H1 (cell line): ENCODE measurements at regions of chr9 and their contacts with region 1.

Region 1: DNA sequence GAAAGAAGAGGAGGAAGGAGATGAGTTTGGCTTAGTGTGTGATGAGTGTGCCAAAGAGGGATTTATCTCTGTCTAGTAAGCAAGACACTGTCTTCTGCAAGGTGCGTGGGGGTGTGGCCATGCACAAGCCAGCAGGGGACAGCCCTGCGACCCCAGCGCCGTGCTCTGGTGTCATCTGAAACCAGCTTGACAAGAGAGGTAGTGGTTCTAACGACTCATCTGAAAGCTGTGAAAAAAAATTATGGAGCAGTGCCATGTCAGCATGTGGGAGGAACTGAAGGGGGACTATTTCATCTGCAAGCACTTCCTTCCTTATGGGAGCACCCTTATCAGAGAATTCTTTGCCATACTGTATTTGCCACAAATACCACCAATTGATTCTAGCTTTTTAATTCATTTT is 398.6 kb downstream of the PSAT1 start:
- DNase-seq: no peak
- H3K4me3 ChIP-seq: no peak overlapping the region
- H3K27ac ChIP-seq: no peak overlapping the region
- H3K4me1 ChIP-seq: no peaks in the 10 kb centered on the region
- H3K27me3 ChIP-seq: no peaks in the 10 kb centered on the region
- CTCF ChIP-seq: no peak
- EP300 ChIP-seq: no peak
- POLR2A ChIP-seq: no peak
- RAD21 ChIP-seq: no peak

Region 2: DNA sequence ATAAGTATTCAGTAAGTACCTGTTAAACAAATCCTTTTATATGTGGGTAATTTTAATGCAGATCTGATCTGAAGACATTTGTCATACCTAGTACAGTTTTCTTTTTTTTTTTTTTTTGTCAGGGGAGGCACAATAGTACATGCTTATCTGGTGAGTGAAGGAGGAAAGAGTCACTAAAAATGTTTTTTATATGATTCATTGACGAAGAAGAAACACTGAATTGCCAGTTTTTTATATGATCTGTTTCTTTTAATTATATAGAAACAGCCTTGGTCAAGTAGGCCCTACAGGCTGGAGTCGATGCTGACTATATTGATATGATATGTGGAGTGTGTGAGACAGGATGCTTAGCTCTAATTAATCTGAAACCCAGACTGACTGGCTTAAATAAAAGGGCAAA is 83.4 kb before region 1 on chr9:
- CTCF ChIA-PET with region 1: no interaction called
- POLR2A ChIA-PET with region 1: no interaction called
- DNase-seq: no peak
- H3K4me3 ChIP-seq: no peak overlapping the region
- H3K27ac ChIP-seq: no peak overlapping the region
- H3K4me1 ChIP-seq: peaks cover 0 to 9% (median 1%) of the 10 kb centered on the region in 4 experiments; a peak in 1 of 7 replicates
- H3K27me3 ChIP-seq: no peaks in the 10 kb centered on the region
- CTCF ChIP-seq: no peak
- EP300 ChIP-seq: no peak
- POLR2A ChIP-seq: no peak
- RAD21 ChIP-seq: no peak

Region 3: DNA sequence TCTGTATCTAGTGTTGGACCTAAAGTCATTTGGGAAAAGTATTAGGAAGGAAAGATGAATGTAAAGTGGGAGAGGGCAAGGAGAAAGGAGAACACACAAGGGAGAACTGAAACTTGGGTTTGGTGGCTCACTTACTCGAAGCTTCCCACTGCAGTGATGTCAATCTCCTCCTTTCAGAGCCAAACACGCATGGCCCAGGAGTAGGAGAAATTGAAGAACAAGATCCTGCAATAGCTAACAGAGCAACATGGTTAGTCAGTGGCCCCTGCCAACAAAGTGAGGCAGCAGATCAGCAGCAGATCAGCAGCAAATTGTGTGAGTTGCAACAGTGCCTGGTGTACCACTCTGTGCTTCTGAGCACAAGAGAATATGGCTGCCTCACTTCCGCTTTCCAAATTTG is 32.1 kb before region 1 on chr9:
- CTCF ChIA-PET with region 1: no interaction called
- POLR2A ChIA-PET with region 1: no interaction called
- DNase-seq: no peak
- H3K4me3 ChIP-seq: no peak overlapping the region
- H3K27ac ChIP-seq: no peak overlapping the region
- H3K4me1 ChIP-seq: peaks cover 0 to 4% (median 0%) of the 10 kb centered on the region in 4 experiments; a peak in 1 of 7 replicates
- H3K27me3 ChIP-seq: no peaks in the 10 kb centered on the region
- CTCF ChIP-seq: no peak
- EP300 ChIP-seq: no peak
- POLR2A ChIP-seq: no peak
- RAD21 ChIP-seq: no peak

Region 4: GRCh38 chr9:78707481-78707991 is 12.0 kb after region 1 on chr9:
- CTCF ChIA-PET with region 1: interaction called, 30 read pairs
- POLR2A ChIA-PET with region 1: interaction called, 3 read pairs
- DNase-seq: no peak
- H3K4me3 ChIP-seq: no peak overlapping the region
- H3K27ac ChIP-seq: no peak overlapping the region
- H3K4me1 ChIP-seq: peaks cover 0 to 2% (median 0%) of the 10 kb centered on the region in 4 experiments; a peak in 2 of 7 replicates
- H3K27me3 ChIP-seq: no peaks in the 10 kb centered on the region
- CTCF ChIP-seq: no peak
- EP300 ChIP-seq: no peak
- POLR2A ChIP-seq: no peak
- RAD21 ChIP-seq: no peak